ENCODE measurements at regions of chr12 and their contacts with region 1.

Region 1: GRCh38 chr12:47949441-47950308 is 13.7 kb upstream of the TMEM106C start:
- DNase-seq: peak; percentile 68 to 88 (median 80)
- ATAC-seq: peak; percentile 70 to 92 (median 89)
- H3K4me3 ChIP-seq: no peak overlapping the region
- H3K27ac ChIP-seq: no peak overlapping the region
- H3K4me1 ChIP-seq: peaks cover 0 to 17% (median 2%) of the 10 kb centered on the region in 12 donors
- H3K27me3 ChIP-seq: no peaks in the 10 kb centered on the region
- CTCF ChIP-seq: peak; percentile 76 to 91 (median 82)
- POLR2A ChIP-seq: no peak

Region 2: DNA sequence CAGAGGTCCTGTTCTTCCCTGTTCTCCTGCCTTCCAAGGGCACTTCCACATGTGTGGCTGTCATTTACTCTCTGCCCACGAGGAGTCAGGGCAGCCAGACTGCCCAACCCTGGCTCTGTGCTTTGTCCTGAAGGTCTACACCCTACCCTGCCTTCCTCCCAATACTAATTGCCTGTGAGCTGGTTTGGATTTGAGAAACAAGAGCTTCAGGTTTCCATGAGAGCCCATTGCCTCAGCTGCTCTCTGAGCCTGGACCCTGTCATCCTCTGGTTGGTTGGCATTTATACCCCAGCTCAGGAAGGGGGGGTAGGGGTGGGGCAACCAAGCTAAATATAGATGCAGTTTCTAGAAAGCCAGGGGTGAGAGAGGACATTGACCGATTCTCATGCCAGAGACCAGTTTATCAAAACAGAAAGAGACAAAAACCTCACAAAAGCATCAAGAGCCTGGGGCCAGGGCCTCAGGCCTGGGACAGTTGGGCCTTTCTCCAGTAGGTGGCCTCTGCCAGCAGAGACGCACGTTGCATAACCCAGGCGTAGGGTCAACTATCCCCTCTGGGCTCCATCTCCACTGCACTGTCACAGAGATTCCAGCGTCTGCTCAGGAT is 79.4 kb before region 1 on chr12:
- intact Hi-C with region 1: loop called in 1 of 10 experiments (anchors 2 kb)
- DNase-seq: peak in 4 of 5 donors; percentile 52 to 60 (median 56)
- ATAC-seq: peak; percentile 81 to 91 (median 89)
- H3K4me3 ChIP-seq: no peak overlapping the region
- H3K27ac ChIP-seq: peak overlapping the region in 10 of 12 donors; percentile 33 to 85 (median 67)
- H3K4me1 ChIP-seq: peaks cover 0 to 42% (median 12%) of the 10 kb centered on the region in 12 donors
- H3K27me3 ChIP-seq: no peaks in the 10 kb centered on the region
- CTCF ChIP-seq: peak in 10 of 12 donors; percentile 12 to 47 (median 33)
- POLR2A ChIP-seq: no peak